H1 (cell line): ENCODE measurements at regions of chr2 and their contacts with region 1.

Region 1: DNA sequence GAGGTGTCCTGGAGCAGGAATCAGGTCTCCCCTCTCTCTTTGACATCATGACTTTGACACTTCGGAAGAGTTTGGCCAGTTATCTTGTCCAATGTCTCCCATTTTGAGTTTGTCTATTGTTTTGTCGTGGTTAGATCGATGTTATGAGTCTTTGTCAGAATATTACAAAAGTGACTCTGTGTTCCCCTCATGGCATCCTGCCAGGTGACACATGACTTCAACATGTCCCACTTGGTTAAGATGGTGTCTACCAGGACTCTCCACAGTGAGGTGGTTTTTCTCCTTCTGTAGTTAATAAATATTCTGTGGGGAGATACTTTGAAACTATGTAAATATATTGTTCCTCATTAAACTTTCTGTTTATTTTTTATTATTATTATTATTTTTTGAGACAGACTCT is 76.6 kb upstream of the BZW1 start:
- DNase-seq: no peak
- H3K4me3 ChIP-seq: no peak overlapping the region
- H3K27ac ChIP-seq: no peak overlapping the region
- H3K4me1 ChIP-seq: peaks cover 5 to 22% (median 19%) of the 10 kb centered on the region in 4 experiments; a peak in 5 of 7 replicates
- H3K27me3 ChIP-seq: no peaks in the 10 kb centered on the region
- CTCF ChIP-seq: no peak
- EP300 ChIP-seq: no peak
- POLR2A ChIP-seq: no peak
- RAD21 ChIP-seq: no peak

Region 2: GRCh38 chr2:200585730-200586643 is 149.1 kb before region 1 on chr2 and contains the start of gene AOX1:
- CTCF ChIA-PET with region 1: interaction called, 12 read pairs
- POLR2A ChIA-PET with region 1: no interaction called
- DNase-seq: peak; percentile 68 to 87
- H3K4me3 ChIP-seq: peak within 1 kb of the TSS; percentile 60 to 77 (median 74)
- H3K27ac ChIP-seq: no peak within 1 kb of the TSS; the same call in 1 of the 2 replicates
- H3K4me1 ChIP-seq: peaks cover 0 to 6% (median 1%) of the 10 kb centered on the region in 4 experiments; a peak in 1 of 7 replicates
- H3K27me3 ChIP-seq: peaks cover 0 to 13% (median 8%) of the 10 kb centered on the region in 4 experiments; a peak in 5 of 7 replicates
- CTCF ChIP-seq: peak in 2 of 3 experiments; percentile 14 to 20; a peak in 2 of 4 replicates
- EP300 ChIP-seq: no peak
- POLR2A ChIP-seq: peak; percentile 68 to 71
- RAD21 ChIP-seq: peak; percentile 6 to 8; a peak in 2 of 4 replicates
- total RNA-seq, gene AOX1: 4.9 and 5.6 TPM in 2 replicates

Region 3: DNA sequence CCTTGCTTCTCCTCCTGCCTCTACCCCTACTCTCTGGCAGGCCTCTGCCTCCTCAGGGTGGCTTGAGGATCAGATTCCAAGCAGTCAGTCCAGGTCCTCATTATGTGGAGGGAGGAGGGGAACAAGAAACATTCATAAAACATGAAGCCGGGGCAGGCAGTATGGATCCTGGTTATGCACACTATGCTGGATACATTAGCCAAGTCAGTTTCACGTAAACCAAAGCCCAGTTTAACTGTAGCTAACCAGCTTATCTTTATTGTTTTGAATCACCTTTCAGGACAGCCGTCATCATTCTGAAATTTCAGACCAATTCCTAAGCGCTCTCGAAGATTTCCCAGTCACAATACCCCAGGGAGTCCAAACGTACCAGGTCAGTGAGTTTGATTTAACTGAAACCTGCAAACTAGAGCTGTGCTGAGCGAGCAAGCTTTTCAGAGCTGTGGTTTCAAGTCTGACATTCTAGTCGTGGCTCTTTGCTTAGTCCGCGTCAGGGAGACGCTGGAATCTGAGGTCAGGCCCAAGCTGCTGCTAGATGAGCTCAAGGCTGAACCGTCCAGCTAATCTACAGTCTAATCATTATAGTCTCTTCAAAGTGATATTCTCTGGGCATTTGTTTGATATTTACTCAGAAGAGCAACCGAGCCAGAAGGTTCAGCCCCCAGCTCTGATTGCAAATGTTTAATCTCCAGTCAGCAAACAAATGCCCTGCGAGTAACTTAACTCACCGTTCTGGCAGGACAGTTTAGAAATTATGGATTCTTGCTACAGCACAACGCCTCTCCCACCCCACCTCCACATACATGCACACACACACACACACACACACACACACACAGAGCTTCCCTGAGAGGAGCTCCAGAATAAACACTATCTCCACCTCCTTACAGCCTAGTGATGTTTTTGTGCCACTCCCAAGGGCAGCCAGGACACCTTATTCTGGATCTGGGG is 12.9 kb after region 1 on chr2:
- CTCF ChIA-PET with region 1: interaction called, 25 read pairs
- POLR2A ChIA-PET with region 1: interaction called, 3 read pairs
- DNase-seq: no peak
- H3K4me3 ChIP-seq: no peak overlapping the region
- H3K27ac ChIP-seq: no peak overlapping the region
- H3K4me1 ChIP-seq: no peaks in the 10 kb centered on the region; a peak in 1 of 7 replicates
- H3K27me3 ChIP-seq: no peaks in the 10 kb centered on the region
- CTCF ChIP-seq: no peak
- EP300 ChIP-seq: no peak
- POLR2A ChIP-seq: no peak
- RAD21 ChIP-seq: no peak

Region 4: DNA sequence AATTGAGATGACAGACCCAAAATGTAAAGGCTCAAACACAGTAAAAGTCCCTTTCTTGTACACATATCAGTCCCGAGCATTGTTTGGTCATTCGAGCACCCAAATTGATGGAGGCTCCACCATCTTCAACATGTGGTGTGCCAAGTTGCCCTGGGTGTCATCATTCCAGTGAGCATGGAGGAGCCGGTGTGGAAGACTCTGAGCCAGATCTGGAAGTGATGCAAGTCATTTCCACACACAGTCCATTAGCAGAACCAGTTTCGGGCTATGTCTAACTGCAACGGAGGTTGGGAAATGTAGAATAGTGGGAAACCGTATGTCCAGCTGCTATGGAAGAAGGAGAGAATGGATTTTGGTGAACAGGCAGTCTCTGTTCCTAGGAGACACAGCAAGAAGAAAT is 35.8 kb after region 1 on chr2:
- CTCF ChIA-PET with region 1: no interaction called
- POLR2A ChIA-PET with region 1: no interaction called
- DNase-seq: no peak
- H3K4me3 ChIP-seq: no peak overlapping the region
- H3K27ac ChIP-seq: no peak overlapping the region
- H3K4me1 ChIP-seq: no peaks in the 10 kb centered on the region
- H3K27me3 ChIP-seq: no peaks in the 10 kb centered on the region
- CTCF ChIP-seq: no peak
- EP300 ChIP-seq: no peak
- POLR2A ChIP-seq: no peak
- RAD21 ChIP-seq: no peak